CD8-positive, alpha-beta memory T cell (primary cell): ENCODE measurements at regions of chr6 and their contacts with region 1.

Region 1: DNA sequence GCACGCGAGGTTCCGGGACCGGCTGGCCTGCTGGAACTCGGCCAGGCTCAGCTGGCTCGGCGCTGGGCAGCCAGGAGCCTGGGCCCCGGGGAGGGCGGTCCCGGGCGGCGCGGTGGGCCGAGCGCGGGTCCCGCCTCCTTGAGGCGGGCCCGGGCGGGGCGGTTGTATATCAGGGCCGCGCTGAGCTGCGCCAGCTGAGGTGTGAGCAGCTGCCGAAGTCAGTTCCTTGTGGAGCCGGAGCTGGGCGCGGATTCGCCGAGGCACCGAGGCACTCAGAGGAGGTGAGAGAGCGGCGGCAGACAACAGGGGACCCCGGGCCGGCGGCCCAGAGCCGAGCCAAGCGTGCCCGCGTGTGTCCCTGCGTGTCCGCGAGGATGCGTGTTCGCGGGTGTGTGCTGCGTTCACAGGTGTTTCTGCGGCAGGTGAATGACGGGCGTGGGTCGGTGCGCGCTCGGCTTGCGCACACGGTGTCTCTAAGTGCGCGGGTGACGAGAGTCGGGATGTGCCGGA is at the start of gene CDKN1A:
- DNase-seq: peak; percentile 58 to 82 (median 69)
- H3K4me3 ChIP-seq: peak within 1 kb of the TSS; percentile 82
- H3K4me3 Mint-ChIP-seq: peak within 1 kb of the TSS; percentile 87 to 100 (median 95)
- H3K27ac ChIP-seq: peak within 1 kb of the TSS; percentile 72
- H3K27ac Mint-ChIP-seq: peak within 1 kb of the TSS; percentile 68 to 98 (median 96)
- H3K4me1 ChIP-seq: peaks cover 35% of the 10 kb centered on the region
- H3K4me1 Mint-ChIP-seq: peaks cover 21 to 30% (median 29%) of the 10 kb centered on the region in 3 donors
- H3K27me3 ChIP-seq: no peaks in the 10 kb centered on the region
- H3K27me3 Mint-ChIP-seq: peaks cover 0 to 6% of the 10 kb centered on the region in 2 donors
- total RNA-seq, gene CDKN1A: 64.7 to 66.4 TPM

Region 2: GRCh38 chr6:35719830-35720733 is 958.5 kb before region 1 on chr6:
- CTCF ChIA-PET with region 1: no interaction called
- POLR2A ChIA-PET with region 1: no interaction called
- DNase-seq: peak in 1 of 5 donors; percentile 33
- H3K4me3 ChIP-seq: peak overlapping the region; percentile 19
- H3K4me3 Mint-ChIP-seq: peak overlapping the region in 5 of 7 donors; percentile 19 to 66 (median 43)
- H3K27ac ChIP-seq: peak overlapping the region; percentile 30
- H3K27ac Mint-ChIP-seq: peak overlapping the region in 4 of 8 donors; percentile 33 to 85 (median 48)
- H3K4me1 ChIP-seq: peaks cover 56% of the 10 kb centered on the region
- H3K4me1 Mint-ChIP-seq: peaks cover 41 to 81% (median 58%) of the 10 kb centered on the region in 3 donors
- H3K27me3 ChIP-seq: no peaks in the 10 kb centered on the region
- H3K27me3 Mint-ChIP-seq: peaks cover 0 to 3% of the 10 kb centered on the region in 2 donors

Region 3: DNA sequence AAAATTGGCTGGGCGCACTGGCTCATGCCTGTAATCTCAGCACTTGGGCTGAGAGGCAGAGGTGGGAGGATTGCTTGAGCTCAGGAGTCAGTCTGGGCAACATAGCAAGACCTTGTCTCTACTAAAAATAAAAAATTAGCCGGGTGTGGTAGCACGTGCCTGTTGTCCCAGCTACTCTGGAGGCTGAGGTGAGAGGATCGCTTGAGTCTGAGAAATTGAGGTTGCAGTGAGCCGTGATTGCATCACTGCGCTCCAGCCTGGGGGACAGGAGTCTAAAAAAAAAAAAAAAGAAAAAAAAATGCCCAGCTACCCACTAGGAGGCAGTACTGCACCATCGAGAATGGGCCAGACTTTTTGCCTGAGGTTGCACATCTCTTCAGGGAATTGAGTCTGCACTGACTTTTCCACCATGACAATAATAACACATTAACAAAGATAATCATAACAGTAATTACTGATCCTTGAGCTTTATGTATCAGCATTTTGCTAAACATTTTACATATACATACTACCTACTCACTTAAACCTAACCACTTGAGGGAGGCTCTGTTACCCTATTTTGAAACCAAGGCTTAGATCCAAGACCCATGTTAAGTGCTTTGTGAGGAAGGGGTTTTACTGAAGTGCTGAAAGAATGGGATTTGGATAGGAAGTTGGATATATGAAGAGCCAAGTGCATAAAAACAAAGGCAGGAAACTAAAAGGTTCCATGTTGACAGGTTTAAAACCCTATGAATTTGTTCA is 63.4 kb before region 1 on chr6:
- CTCF ChIA-PET with region 1: interaction called, 12 read pairs
- POLR2A ChIA-PET with region 1: interaction called, 5 read pairs
- DNase-seq: peak; percentile 27 to 61 (median 47)
- H3K4me3 ChIP-seq: no peak overlapping the region
- H3K4me3 Mint-ChIP-seq: no peak overlapping the region
- H3K27ac ChIP-seq: no peak overlapping the region
- H3K27ac Mint-ChIP-seq: peak overlapping the region in 7 of 8 donors; percentile 39 to 93 (median 85)
- H3K4me1 ChIP-seq: no peaks in the 10 kb centered on the region
- H3K4me1 Mint-ChIP-seq: peaks cover 14 to 28% (median 26%) of the 10 kb centered on the region in 3 donors
- H3K27me3 ChIP-seq: no peaks in the 10 kb centered on the region
- H3K27me3 Mint-ChIP-seq: no peaks in the 10 kb centered on the region